Activated CD8-positive, alpha-beta T cell treated with anti-CD3 and anti-CD28 coated beads, Interleukin-2, amount 10 ng/mL, durations not matched to agents 7 days and 5 days (primary cell): ENCODE measurements at regions of chr7 and their contacts with region 1.

Region 1: DNA sequence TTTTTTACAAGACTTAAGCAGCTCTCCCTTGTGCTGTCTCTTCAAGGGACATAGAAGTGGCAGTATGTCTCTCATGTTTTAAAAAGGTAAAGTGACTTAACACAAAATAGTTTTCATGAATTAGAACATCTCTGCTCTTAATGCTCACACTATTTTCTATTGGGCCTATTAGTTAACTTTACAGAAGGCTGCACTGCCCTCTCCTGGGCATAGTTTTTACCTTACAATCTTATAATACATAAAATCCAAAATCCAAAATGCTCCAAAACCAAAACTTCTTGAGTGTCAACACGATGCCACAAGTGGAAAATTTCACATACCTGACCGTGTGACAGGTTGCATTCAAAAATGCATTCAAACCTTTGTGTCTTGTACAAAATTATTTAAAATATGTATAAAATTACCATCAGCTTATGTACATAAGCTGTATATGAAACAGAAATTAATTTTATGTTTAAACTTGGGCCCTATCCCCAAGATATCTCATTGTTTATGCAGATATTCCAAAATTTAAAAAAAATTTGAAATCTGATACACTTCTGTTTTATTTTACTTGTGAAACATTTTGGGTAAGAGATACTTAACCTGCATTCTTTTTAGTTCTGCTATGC is 25.8 kb downstream of the TES start:
- DNase-seq: peak; percentile 67
- ATAC-seq: no peak
- H3K4me3 Mint-ChIP-seq: no peak overlapping the region
- H3K27ac Mint-ChIP-seq: no peak overlapping the region
- H3K4me1 Mint-ChIP-seq: peaks cover 37% of the 10 kb centered on the region
- H3K27me3 Mint-ChIP-seq: no peaks in the 10 kb centered on the region

Region 2: GRCh38 chr7:116165717-116166116 is 70.4 kb before region 1 on chr7:
- CTCF ChIA-PET with region 1: interaction called, 23 read pairs
- POLR2A ChIA-PET with region 1: no interaction called
- DNase-seq: no peak
- ATAC-seq: no peak
- H3K4me3 Mint-ChIP-seq: no peak overlapping the region
- H3K27ac Mint-ChIP-seq: no peak overlapping the region
- H3K4me1 Mint-ChIP-seq: peaks cover 40% of the 10 kb centered on the region
- H3K27me3 Mint-ChIP-seq: peaks cover 14% of the 10 kb centered on the region

Region 3: GRCh38 chr7:116180302-116180701 is 55.8 kb before region 1 on chr7:
- CTCF ChIA-PET with region 1: interaction called, 212 read pairs
- POLR2A ChIA-PET with region 1: no interaction called
- DNase-seq: peak; percentile 39
- ATAC-seq: peak; percentile 72
- H3K4me3 Mint-ChIP-seq: no peak overlapping the region
- H3K27ac Mint-ChIP-seq: no peak overlapping the region
- H3K4me1 Mint-ChIP-seq: no peaks in the 10 kb centered on the region
- H3K27me3 Mint-ChIP-seq: peaks cover 9% of the 10 kb centered on the region

Region 4: DNA sequence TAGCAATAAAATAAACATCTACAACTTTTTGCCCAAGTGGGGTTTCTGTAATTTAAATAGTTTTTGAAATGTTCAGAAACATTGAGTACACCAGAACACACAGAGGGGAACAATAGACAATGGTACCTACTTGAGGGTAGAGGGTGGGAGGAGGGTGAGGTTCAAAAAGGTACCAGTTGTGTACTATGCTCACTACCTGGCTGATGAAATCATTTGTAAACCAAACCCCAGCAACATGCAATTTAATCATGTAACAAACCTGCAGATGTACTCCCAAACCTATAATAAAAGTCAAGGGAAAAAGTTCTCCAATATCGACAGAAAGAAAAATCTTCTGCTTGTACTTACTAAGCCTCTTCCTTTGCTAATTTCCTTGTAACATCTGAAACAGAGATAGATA is 30.0 kb before region 1 on chr7:
- CTCF ChIA-PET with region 1: interaction called, 37 read pairs
- POLR2A ChIA-PET with region 1: interaction called, 3 read pairs
- DNase-seq: no peak
- ATAC-seq: no peak
- H3K4me3 Mint-ChIP-seq: no peak overlapping the region
- H3K27ac Mint-ChIP-seq: no peak overlapping the region
- H3K4me1 Mint-ChIP-seq: peaks cover 8% of the 10 kb centered on the region
- H3K27me3 Mint-ChIP-seq: peaks cover 20% of the 10 kb centered on the region

Region 5: DNA sequence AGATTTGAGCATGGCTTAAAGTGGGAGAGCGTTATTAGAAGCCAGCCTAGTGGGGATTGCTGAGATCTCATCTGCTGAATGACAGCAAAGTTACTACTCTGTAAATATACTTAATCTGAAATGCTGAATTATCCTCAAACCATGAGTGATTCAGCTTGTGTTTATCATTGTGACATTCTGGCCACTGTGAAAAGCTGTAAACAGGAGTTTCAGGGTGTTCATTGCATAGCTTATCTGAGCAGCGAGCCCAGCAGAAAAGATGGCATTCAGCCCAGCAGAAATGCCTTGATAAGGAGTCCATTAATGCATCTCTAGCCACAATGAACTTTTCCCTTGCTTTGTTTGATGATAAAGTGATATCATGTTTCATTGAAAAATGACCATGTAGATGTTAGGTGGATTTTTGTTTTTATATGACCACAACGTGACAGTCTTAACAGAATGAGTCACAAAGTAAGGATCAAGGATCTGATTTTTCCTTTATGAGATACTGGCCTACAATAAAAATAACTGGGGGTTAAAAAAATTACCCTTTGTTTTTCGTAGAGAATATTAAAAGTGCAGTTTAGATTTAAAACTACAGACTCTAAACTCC is 18.0 kb before region 1 on chr7:
- CTCF ChIA-PET with region 1: interaction called, 29 read pairs
- POLR2A ChIA-PET with region 1: no interaction called
- DNase-seq: no peak
- ATAC-seq: no peak
- H3K4me3 Mint-ChIP-seq: no peak overlapping the region
- H3K27ac Mint-ChIP-seq: no peak overlapping the region
- H3K4me1 Mint-ChIP-seq: peaks cover 71% of the 10 kb centered on the region
- H3K27me3 Mint-ChIP-seq: no peaks in the 10 kb centered on the region

Region 6: DNA sequence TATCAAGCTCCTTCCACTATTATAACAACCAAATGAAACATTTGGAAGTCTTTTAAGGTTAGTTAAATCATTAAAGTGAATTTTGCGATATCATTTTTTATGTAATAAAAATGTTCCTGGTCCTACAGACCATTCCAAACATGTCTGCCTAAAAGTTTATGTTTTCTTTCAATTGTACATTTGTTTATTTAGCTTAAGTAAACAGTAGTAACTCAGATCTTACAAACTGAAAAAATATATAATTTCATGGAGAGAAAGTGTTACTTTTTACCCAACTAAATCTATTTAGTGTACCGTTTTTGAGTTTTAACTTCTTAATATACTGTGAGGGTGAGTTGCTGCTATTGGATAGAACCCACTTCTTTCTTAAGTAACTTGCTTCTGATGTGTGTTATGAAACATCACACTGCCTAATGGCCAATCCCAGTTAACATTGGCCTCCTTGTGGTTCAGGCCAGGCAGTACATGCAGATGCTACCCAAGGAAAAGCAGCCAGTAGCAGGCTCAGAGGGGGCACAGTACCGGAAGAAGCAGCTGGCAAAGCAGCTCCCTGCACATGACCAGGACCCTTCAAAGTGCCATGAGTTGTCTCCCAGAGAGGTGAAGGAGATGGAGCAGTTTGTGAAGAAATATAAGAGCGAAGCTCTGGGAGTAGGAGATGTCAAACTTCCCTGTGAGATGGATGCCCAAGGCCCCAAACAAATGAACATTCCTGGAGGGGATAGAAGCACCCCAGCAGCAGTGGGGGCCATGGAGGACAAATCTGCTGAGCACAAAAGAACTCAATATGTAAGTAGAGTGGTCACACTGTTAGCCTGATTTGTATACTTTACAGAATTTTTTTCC is 13.8 kb after region 1 on chr7:
- CTCF ChIA-PET with region 1: interaction called, 15 read pairs
- POLR2A ChIA-PET with region 1: no interaction called
- DNase-seq: no peak
- ATAC-seq: peak; percentile 53
- H3K4me3 Mint-ChIP-seq: no peak overlapping the region
- H3K27ac Mint-ChIP-seq: no peak overlapping the region
- H3K4me1 Mint-ChIP-seq: peaks cover 9% of the 10 kb centered on the region
- H3K27me3 Mint-ChIP-seq: no peaks in the 10 kb centered on the region

Region 7: DNA sequence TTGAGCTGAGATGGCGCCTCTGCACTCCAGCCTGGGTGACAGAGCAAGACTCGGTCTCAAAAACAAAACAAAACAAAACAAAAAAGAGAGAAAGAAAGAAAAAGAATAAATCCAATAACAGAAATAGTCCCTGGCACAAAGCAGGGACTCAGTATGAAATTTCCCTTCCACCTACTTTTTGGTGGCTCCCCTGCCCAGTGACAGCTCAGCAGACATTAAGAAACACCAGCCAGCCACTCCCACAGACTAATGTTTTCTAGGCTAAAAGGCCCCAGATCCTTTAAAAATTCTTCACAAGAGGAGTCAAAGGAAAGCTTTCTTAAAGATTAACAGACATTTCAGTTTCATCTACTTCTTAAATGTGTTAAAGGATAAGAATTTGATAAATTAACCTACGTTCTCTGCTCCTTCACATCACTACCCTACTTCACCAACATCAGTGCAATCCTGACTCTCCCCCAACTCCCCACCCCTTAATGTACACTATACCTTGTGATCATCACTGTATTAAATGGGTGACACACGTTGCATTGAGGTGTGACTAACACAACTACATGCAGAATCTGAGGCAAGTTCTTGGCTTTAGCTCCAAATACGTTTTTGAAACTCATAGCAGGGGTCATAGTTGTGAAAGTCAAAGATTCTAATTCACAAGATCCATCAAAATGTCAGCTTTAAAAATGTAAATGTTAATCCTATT is 149.0 kb after region 1 on chr7:
- CTCF ChIA-PET with region 1: no interaction called
- POLR2A ChIA-PET with region 1: no interaction called
- DNase-seq: no peak
- ATAC-seq: no peak
- H3K4me3 Mint-ChIP-seq: no peak overlapping the region
- H3K27ac Mint-ChIP-seq: no peak overlapping the region
- H3K4me1 Mint-ChIP-seq: no peaks in the 10 kb centered on the region
- H3K27me3 Mint-ChIP-seq: no peaks in the 10 kb centered on the region

Region 8: GRCh38 chr7:116588641-116589594 is 352.8 kb after region 1 on chr7:
- CTCF ChIA-PET with region 1: interaction called, 10 read pairs
- POLR2A ChIA-PET with region 1: no interaction called
- DNase-seq: no peak
- ATAC-seq: peak; percentile 38
- H3K4me3 Mint-ChIP-seq: no peak overlapping the region
- H3K27ac Mint-ChIP-seq: no peak overlapping the region
- H3K4me1 Mint-ChIP-seq: peaks cover 26% of the 10 kb centered on the region
- H3K27me3 Mint-ChIP-seq: peaks cover 17% of the 10 kb centered on the region